ENCODE measurements at regions of chr17 and their contacts with region 1.

Region 1: GRCh38 chr17:68613739-68614298 is 12.7 kb upstream of the FAM20A start:
- DNase-seq: peak; percentile 68
- ATAC-seq: peak; percentile 75
- H3K4me3 Mint-ChIP-seq: no peak overlapping the region
- H3K27ac Mint-ChIP-seq: no peak overlapping the region
- H3K4me1 Mint-ChIP-seq: peaks cover 2% of the 10 kb centered on the region
- H3K27me3 Mint-ChIP-seq: peaks cover 21% of the 10 kb centered on the region

Region 2: DNA sequence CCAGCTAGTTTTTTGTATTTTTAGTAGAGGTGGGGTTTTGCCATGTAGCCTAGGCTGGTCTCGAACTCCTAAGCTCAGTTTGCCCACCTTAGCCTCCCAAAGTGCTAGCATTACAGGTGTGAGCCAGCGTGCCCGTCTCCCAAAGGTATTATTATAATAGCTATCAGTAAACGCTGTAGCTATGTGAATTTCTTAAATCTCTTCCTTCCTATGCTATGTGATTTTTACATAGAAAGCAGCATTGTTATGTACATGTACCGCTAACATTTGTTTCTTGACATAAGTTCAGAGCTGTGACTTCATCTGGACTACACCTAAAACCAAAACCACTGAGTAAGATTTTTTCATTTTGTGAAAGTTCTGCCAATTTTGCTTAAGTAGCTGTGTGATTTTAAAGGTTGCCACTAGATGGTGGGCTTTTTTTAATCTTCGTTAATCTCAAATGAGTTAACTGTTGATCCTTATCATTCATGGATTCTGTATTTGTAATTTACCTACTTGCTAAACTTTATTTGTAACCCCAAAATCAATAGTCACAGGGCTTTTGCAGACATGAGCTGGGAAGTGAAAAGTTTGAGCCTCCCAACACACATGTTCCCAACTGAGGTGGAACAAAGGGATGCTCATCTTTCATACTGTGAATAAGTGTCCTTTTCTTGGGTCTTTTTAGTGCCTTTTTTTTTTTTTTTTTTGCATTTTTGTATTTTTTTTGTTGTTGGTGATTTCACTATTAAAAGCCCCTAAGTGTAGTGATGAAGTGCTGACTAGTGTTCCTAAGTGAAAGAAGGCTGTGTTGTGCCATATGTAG is 79.7 kb before region 1 on chr17:
- CTCF ChIA-PET with region 1: interaction called, 17 read pairs
- POLR2A ChIA-PET with region 1: no interaction called
- DNase-seq: no peak
- ATAC-seq: no peak
- H3K4me3 Mint-ChIP-seq: no peak overlapping the region
- H3K27ac Mint-ChIP-seq: no peak overlapping the region
- H3K4me1 Mint-ChIP-seq: no peaks in the 10 kb centered on the region
- H3K27me3 Mint-ChIP-seq: no peaks in the 10 kb centered on the region

Region 3: GRCh38 chr17:68821860-68822696 is 208.3 kb after region 1 on chr17:
- CTCF ChIA-PET with region 1: no interaction called
- POLR2A ChIA-PET with region 1: no interaction called
- DNase-seq: no peak
- ATAC-seq: no peak
- H3K4me3 Mint-ChIP-seq: no peak overlapping the region
- H3K27ac Mint-ChIP-seq: no peak overlapping the region
- H3K4me1 Mint-ChIP-seq: no peaks in the 10 kb centered on the region
- H3K27me3 Mint-ChIP-seq: no peaks in the 10 kb centered on the region

Measured in activated CD8-positive, alpha-beta T cell treated with anti-CD3 and anti-CD28 coated beads, Interleukin-2, amount 10 ng/mL, durations not matched to agents 7 days and 5 days (primary cell).